Gastrocnemius medialis (tissue), 4 donors: ENCODE measurements at regions of chr4 and their contacts with region 1.

Region 1: DNA sequence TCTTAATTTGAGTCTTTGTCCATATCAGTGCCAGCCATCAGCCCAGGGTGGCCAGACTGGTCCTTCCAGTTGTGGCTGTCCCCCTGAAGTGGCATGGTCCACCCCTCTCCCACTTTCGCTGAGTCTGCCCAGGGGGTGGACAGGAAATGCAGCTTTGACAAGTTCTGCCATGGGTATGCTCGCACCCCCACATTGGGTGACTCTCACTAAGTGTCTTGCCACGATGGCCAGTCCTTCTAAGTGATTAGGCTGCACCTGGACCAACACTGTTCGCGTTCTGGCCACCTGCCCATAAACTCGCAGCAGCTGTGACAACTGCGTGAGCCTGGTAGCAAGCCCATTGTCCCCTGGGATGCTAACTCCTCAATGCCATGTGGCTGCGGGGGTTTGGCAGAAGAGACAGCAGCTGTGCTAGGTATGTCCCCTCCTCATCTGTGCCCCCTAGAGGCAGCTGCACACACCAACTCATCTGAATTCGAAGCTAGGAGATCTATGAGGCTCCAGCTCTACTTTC is 10.0 kb upstream of the LNX1 start:
- DNase-seq: peak in 1 of 2 donors; percentile 23
- ATAC-seq: peak in 1 of 2 donors; percentile 30
- H3K4me3 ChIP-seq: no peak overlapping the region
- H3K27ac ChIP-seq: no peak overlapping the region
- H3K4me1 ChIP-seq: no peaks in the 10 kb centered on the region
- H3K27me3 ChIP-seq: no peaks in the 10 kb centered on the region
- CTCF ChIP-seq: no peak
- POLR2A ChIP-seq: no peak

Region 2: DNA sequence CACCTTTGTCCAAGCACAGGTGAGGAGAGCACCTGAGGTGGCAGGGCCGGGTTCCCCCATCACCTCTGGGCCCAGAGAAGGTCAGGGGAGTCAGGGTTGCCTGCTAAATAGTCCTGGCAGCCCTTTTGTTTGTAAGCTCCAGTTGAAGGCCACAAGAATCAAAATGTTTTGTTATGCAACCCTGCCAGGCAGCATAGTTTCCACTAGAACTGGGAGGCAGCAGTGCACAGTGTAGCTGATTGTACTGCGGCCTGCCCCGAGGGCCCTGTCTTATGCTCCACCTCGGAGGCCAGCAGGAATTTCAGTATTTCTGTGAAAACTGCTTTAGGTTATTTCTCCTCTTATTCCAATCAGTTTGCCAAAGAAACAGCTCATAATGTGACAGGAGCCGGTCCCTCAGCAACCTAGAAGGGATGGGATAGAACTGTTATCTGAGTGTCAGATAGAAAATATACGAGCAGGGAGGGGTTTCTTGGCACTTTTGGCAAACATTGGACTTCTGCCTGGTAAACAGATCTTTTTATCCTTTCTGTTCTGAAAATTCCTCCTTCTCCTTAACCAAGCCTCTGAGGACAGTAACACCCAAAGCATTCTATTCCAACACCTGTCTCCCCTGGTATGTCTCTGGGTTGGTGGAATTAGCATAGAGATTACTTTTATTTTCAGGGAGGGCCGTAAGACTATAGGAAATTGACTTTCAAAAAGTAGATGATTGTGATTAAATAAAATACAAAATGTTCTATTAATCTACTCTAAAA is 103.6 kb before region 1 on chr4:
- in situ Hi-C with region 1: loop called in 1 of 4 experiments (anchors 25 kb)
- intact Hi-C with region 1: loop called (anchors 5 kb)
- DNase-seq: peak; percentile 26 to 46
- ATAC-seq: peak; percentile 77 to 79
- H3K4me3 ChIP-seq: no peak overlapping the region
- H3K27ac ChIP-seq: peak overlapping the region in 3 of 4 donors; percentile 27 to 56 (median 55)
- H3K4me1 ChIP-seq: no peaks in the 10 kb centered on the region
- H3K27me3 ChIP-seq: no peaks in the 10 kb centered on the region
- CTCF ChIP-seq: no peak
- POLR2A ChIP-seq: no peak

Region 3: GRCh38 chr4:53507671-53508286 is 93.5 kb before region 1 on chr4:
- in situ Hi-C with region 1: loop called in 1 of 4 experiments (anchors 25 kb)
- intact Hi-C with region 1: no loop called
- DNase-seq: peak; percentile 51 to 72
- ATAC-seq: peak; percentile 88 to 90
- H3K4me3 ChIP-seq: peak overlapping the region; percentile 16 to 52 (median 40)
- H3K27ac ChIP-seq: peak overlapping the region; percentile 65 to 78 (median 71)
- H3K4me1 ChIP-seq: peaks cover 0 to 5% of the 10 kb centered on the region in 2 donors
- H3K27me3 ChIP-seq: no peaks in the 10 kb centered on the region
- CTCF ChIP-seq: no peak
- POLR2A ChIP-seq: no peak

Region 4: DNA sequence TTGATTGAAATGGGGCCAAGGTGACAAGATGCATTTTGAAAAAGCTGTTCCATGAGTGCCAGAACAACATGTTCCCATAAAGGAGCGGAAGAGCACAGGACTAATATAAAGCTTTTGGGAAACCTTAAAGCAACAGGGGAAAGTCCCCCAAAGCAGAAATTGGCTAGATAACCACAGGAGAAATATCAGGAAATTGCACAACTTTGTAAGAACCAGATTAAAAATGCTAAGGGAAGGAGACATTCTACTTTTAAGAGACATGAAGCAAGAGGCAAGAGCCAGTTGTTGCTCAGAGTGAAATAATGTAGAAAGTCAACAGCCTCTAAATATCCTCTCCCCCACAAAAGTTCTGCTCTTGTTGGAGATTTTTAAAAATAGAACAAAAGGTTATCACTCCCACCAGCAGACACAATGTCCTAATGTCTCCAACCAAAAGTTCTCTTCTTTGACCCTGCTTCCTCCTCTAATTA is 75.1 kb after region 1 on chr4:
- in situ Hi-C with region 1: no loop called
- intact Hi-C with region 1: no loop called
- DNase-seq: peak in 1 of 2 donors; percentile 15
- ATAC-seq: peak; percentile 88
- H3K4me3 ChIP-seq: no peak overlapping the region
- H3K27ac ChIP-seq: peak overlapping the region; percentile 49 to 71 (median 64)
- H3K4me1 ChIP-seq: peaks cover 0 to 3% of the 10 kb centered on the region in 2 donors
- H3K27me3 ChIP-seq: no peaks in the 10 kb centered on the region
- CTCF ChIP-seq: no peak
- POLR2A ChIP-seq: no peak